CD4-positive, alpha-beta T cell (primary cell): ENCODE measurements at regions of chr5 and their contacts with region 1.

Region 1: GRCh38 chr5:172114875-172115422 is 73.1 kb downstream of the STK10 start:
- DNase-seq: peak in 13 of 14 experiments; percentile 33 to 90 (median 51)
- ATAC-seq: peak; percentile 18
- H3K4me3 ChIP-seq: peak overlapping the region; percentile 19
- H3K4me3 Mint-ChIP-seq: peak overlapping the region; percentile 57
- H3K27ac ChIP-seq: peak overlapping the region; percentile 79 to 84
- H3K27ac Mint-ChIP-seq: peak overlapping the region; percentile 91
- H3K4me1 ChIP-seq: peaks cover 96% of the 10 kb centered on the region
- H3K4me1 Mint-ChIP-seq: peaks cover 82% of the 10 kb centered on the region
- H3K27me3 ChIP-seq: no peaks in the 10 kb centered on the region
- H3K27me3 Mint-ChIP-seq: no peaks in the 10 kb centered on the region
- CTCF ChIP-seq: no peak

Region 2: GRCh38 chr5:172065501-172065990 is 49.4 kb before region 1 on chr5:
- CTCF ChIA-PET with region 1: no interaction called
- POLR2A ChIA-PET with region 1: interaction called, 11 read pairs
- intact Hi-C with region 1: loop called in 1 of 2 experiments (anchors 2 kb)
- DNase-seq: peak in 1 of 14 experiments; percentile 34
- ATAC-seq: no peak
- H3K4me3 ChIP-seq: no peak overlapping the region
- H3K4me3 Mint-ChIP-seq: no peak overlapping the region
- H3K27ac ChIP-seq: peak overlapping the region; percentile 69 to 84
- H3K27ac Mint-ChIP-seq: peak overlapping the region; percentile 89
- H3K4me1 ChIP-seq: peaks cover 44% of the 10 kb centered on the region
- H3K4me1 Mint-ChIP-seq: peaks cover 76% of the 10 kb centered on the region
- H3K27me3 ChIP-seq: no peaks in the 10 kb centered on the region
- H3K27me3 Mint-ChIP-seq: no peaks in the 10 kb centered on the region
- CTCF ChIP-seq: no peak

Region 3: DNA sequence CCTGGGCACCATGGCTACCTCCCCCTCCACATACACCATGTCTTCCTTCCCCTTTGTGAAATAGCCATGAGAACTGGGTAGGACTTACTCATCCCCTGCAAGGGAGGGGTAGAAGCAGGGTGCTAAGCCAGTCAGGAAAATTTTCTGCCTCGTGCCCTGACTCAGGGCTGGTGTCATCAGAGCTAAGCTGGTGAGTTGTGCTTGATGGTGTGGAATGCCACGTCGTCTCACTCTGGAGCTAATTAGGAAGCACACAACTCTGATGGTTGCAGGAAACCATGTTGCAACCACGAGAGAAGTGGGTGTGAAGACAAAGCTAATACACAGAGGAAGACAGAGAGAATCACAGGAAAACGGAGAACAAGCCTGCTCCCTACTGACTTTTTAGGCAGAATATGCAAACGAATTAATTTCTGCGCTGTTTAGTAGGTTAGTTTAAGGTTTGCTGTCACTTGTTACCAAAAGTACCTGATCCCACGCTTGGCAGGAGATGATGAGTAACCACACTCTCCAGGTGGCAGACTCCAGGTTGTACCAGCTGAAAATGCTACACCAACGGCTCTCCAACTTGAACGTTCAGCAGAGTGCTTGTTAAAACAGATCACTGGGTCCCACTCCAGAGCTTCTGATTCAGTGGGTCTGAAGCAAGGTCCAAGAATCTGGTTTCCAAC is 18.5 kb after region 1 on chr5:
- CTCF ChIA-PET with region 1: interaction called, 7 read pairs
- POLR2A ChIA-PET with region 1: interaction called, 10 read pairs
- intact Hi-C with region 1: no loop called
- DNase-seq: peak in 5 of 14 experiments; percentile 23 to 81 (median 65)
- ATAC-seq: peak; percentile 70
- H3K4me3 ChIP-seq: no peak overlapping the region
- H3K4me3 Mint-ChIP-seq: peak overlapping the region; percentile 58
- H3K27ac ChIP-seq: peak overlapping the region; percentile 42 to 44
- H3K27ac Mint-ChIP-seq: peak overlapping the region; percentile 66
- H3K4me1 ChIP-seq: peaks cover 62% of the 10 kb centered on the region
- H3K4me1 Mint-ChIP-seq: peaks cover 75% of the 10 kb centered on the region
- H3K27me3 ChIP-seq: no peaks in the 10 kb centered on the region
- H3K27me3 Mint-ChIP-seq: no peaks in the 10 kb centered on the region
- CTCF ChIP-seq: no peak

Region 4: DNA sequence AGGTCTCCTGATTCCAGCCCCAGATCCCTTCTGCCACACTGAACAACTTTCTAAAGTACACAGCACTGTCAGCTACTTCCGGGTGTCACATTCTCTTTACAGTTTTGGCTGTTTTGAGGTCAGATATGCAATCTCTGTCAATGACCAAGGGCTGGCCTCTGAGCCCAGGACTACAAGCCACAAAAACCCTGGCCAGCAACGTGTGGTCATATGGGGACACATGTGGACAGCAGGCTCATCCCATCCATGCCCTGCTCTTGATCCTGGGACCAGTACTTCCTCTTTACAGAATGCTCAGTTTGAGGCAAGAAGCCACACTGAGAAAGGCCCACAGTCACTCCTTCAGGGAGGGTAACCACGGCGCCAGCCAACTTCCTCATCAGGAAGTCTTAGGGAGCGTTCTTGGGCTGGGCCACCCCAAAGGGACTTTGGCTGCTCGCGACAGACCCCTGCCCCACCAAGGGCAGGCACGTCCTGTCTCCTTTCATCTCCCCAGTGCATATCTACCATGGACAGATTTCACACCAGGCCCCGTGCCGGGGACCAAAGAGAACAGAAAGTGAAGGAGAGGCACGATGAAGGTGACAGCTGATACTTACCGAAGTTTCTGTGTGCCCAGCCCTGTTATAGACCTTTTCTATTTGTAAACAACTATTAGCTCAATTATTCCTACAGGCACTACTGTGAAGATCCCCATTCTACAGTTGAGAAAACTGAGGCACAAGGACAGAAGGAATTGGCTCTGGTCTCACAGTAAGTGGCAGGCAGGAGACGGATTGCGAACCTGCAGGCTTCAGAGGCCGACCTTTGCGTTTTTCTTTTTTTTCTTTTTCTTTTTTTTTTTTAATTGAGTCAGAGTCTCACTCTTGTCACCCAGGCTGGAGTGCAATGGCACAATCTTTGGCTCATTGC is 35.8 kb after region 1 on chr5:
- CTCF ChIA-PET with region 1: interaction called, 4 read pairs
- POLR2A ChIA-PET with region 1: no interaction called
- intact Hi-C with region 1: loop called (anchors 5 kb)
- DNase-seq: peak in 5 of 14 experiments; percentile 14 to 69 (median 48)
- ATAC-seq: peak; percentile 62
- H3K4me3 ChIP-seq: peak overlapping the region; percentile 23
- H3K4me3 Mint-ChIP-seq: peak overlapping the region; percentile 25
- H3K27ac ChIP-seq: peak overlapping the region; percentile 73 to 76
- H3K27ac Mint-ChIP-seq: peak overlapping the region; percentile 93
- H3K4me1 ChIP-seq: peaks cover 87% of the 10 kb centered on the region
- H3K4me1 Mint-ChIP-seq: peaks cover 85% of the 10 kb centered on the region
- H3K27me3 ChIP-seq: no peaks in the 10 kb centered on the region
- H3K27me3 Mint-ChIP-seq: no peaks in the 10 kb centered on the region
- CTCF ChIP-seq: no peak